ENCODE measurements at regions of chr10 and their contacts with region 1.

Region 1: DNA sequence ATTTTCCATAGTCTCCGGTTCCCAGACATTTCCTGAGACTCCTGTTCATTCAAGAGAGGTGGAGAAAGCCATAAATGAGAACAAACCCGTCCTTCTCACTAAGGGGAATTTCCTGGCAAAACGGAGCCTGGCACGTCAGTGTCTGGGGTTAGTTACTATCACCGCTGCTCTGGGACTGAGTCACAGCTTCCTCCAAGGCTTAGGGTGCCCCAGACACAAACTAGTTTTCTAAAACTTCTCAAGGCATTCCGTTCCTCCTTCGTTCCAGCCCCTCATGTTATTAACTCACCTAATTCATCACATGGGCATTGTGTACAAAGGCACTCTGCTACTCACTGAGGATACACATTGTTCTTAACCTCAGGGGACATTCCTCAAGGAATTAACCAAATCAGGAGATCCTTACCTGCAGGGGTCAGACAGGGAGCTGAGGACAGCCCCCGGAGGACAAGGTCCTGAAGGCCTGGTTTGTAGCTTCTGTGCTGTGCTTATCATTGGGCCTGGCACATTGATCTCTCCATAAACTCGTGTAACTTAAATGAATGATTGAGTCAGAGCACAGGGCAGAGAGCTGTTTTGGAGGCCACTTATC is 103.0 kb upstream of the KLF6 start:
- DNase-seq: peak; percentile 83 to 96 (median 84)
- H3K4me3 ChIP-seq: no peak overlapping the region
- H3K4me3 Mint-ChIP-seq: no peak overlapping the region
- H3K27ac ChIP-seq: peak overlapping the region; percentile 40 to 71
- H3K27ac Mint-ChIP-seq: peak overlapping the region in 6 of 7 donors; percentile 44 to 92 (median 71)
- H3K4me1 ChIP-seq: peaks cover 14 to 16% of the 10 kb centered on the region in 2 donors
- H3K4me1 Mint-ChIP-seq: peaks cover 11% of the 10 kb centered on the region
- H3K27me3 ChIP-seq: no peaks in the 10 kb centered on the region
- H3K27me3 Mint-ChIP-seq: peaks cover 0 to 3% (median 1%) of the 10 kb centered on the region in 3 donors
- CTCF ChIP-seq: no peak

Region 2: GRCh38 chr10:4051011-4051640 is 163.1 kb after region 1 on chr10:
- intact Hi-C with region 1: loop called in 1 of 2 experiments (anchors 10 kb)
- DNase-seq: peak; percentile 23 to 63 (median 41)
- H3K4me3 ChIP-seq: peak overlapping the region; percentile 31 to 95 (median 77)
- H3K4me3 Mint-ChIP-seq: peak overlapping the region; percentile 68 to 95
- H3K27ac ChIP-seq: peak overlapping the region; percentile 41 to 97
- H3K27ac Mint-ChIP-seq: peak overlapping the region; percentile 91 to 97 (median 95)
- H3K4me1 ChIP-seq: peaks cover 32 to 39% of the 10 kb centered on the region in 2 donors
- H3K4me1 Mint-ChIP-seq: peaks cover 35% of the 10 kb centered on the region
- H3K27me3 ChIP-seq: no peaks in the 10 kb centered on the region
- H3K27me3 Mint-ChIP-seq: no peaks in the 10 kb centered on the region
- CTCF ChIP-seq: no peak

Region 3: DNA sequence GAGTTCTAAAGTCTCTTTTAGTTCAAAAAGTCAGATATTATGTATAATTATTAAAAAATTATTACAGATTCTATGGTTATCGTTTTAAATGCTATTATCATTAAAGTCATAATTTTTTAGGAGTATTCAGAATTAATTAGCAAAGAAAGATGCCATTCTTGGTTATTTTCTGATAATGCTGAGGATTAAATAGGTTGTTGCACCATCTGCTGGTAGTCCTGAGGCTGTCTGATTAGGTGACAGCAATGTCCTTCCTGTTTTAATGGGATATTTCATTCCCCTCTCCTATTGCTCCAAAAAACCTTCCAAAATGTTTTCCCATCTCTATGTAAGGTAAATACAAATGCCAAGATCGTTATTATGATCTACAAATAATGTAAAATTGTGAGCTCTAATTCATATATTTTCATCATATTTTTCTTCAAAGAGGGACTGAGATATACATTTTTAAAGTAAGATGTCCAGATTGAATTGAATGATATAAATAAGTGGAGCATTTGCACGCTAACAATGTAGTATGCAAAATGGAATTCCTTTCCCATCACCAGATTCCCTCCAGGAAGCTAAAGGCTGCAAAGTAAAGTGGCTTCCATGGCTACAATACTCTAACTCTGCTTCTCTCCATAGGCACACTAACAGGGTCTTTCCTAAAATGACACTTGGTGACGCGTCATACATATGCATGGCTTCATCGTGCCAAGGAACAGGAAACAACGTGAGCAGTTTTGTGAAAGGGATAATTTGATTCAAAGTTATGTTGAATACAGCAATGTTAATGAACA is 879.2 kb after region 1 on chr10:
- intact Hi-C with region 1: loop called in 1 of 2 experiments (anchors 10 kb)
- DNase-seq: peak in 2 of 3 donors; percentile 26 to 29
- H3K4me3 ChIP-seq: no peak overlapping the region
- H3K4me3 Mint-ChIP-seq: no peak overlapping the region
- H3K27ac ChIP-seq: no peak overlapping the region
- H3K27ac Mint-ChIP-seq: no peak overlapping the region
- H3K4me1 ChIP-seq: peaks cover 9 to 11% of the 10 kb centered on the region in 2 donors
- H3K4me1 Mint-ChIP-seq: peaks cover 13% of the 10 kb centered on the region
- H3K27me3 ChIP-seq: no peaks in the 10 kb centered on the region
- H3K27me3 Mint-ChIP-seq: peaks cover 0 to 4% (median 2%) of the 10 kb centered on the region in 3 donors
- CTCF ChIP-seq: peak; percentile 58

Measured in CD14-positive monocyte (primary cell).